Heart left ventricle (tissue), 16 donors: ENCODE measurements at regions of chr11 and their contacts with region 1.

Region 1: DNA sequence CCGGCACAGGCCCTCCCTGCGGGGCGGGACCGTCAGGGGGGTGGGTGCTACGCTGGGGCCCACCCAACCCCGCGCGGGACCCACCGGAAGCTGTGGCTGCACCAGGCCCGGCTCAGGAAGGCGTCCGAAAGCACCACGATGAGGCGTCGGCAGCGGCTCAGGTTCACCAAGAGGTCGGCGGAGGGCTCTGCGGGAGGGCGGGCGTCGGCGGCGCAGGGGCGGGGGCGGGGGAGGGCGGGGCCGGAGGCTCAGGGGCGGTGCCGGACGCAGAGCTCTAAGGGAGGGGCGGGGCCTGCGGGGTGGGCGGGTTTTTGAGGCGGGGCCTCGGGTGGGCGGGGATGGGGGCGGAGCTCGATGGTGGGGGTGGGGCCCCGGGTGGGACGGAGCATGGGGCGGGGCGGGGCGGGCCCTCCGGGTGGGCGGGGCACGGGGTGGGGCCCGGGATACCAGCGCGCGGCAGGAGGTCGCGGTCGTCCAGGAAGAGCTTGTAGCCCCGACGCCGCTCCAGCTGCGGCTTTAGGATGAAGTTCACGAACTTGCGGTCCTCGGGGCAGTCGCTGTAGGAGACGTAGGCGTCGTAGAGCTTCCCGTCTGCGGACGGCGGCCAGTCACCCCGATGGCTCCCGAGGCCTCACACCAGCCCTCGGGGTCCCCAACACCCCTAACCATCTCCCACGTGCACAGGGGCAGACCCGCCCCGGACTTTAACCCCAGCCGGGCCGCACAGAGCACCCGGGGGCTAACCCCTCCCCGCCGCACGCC is 7.6 kb downstream of the SIGIRR start:
- DNase-seq: peak; percentile 85 to 93 (median 88)
- ATAC-seq: peak; percentile 44 to 81 (median 78)
- H3K4me3 ChIP-seq: peak overlapping the region; percentile 49 to 76 (median 67)
- H3K27ac ChIP-seq: peak overlapping the region; percentile 28 to 82 (median 75)
- H3K4me1 ChIP-seq: peaks cover 0 to 24% (median 15%) of the 10 kb centered on the region in 12 donors
- H3K27me3 ChIP-seq: peaks cover 0 to 8% (median 0%) of the 10 kb centered on the region in 9 donors
- CTCF ChIP-seq: no peak
- POLR2A ChIP-seq: no peak

Region 2: DNA sequence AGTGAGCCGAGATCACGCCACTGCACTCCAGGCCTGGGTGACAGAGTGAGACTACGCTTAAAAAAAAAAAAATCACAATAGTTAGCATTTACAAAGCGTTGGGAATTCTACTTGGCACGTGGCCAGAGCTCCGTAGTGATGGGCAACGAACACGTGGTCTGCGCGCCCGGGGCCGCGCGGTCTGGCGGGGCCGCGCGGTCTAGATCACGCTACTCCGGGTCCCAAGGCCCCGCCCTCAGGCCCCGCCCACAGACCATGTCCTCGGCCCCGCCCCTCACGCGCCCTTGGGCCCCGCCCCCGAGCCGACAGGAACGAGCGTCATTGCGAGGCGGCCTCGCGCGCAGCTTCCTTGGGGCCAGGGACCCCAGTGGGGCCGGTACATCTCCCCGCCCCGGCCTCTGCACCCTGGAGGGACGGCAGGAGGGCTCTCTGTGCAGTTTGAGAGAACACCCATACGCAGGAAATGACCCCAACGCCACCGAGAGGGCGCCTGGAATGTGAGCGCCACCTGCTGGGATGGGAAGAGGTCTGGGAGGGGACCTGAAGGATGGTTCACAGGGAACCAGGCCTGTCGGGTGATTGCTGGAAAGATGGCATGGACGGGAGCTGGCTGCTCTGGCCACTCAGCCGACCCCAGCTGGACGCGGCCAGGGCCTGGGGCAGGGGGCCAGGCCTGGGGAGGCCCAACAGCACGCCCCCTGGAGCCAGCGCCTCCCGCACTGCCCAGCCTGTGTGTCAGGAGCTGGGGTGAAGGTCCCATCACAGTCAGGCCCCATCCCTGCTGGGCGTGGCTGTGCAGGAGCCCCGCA is 41.0 kb after region 1 on chr11:
- intact Hi-C with region 1: loop called in 8 of 10 experiments (anchors 2 to 5 kb)
- DNase-seq: peak; percentile 95 to 98 (median 95)
- ATAC-seq: peak; percentile 85 to 90 (median 86)
- H3K4me3 ChIP-seq: peak overlapping the region; percentile 26 to 92 (median 64)
- H3K27ac ChIP-seq: peak overlapping the region; percentile 77 to 97 (median 93)
- H3K4me1 ChIP-seq: peaks cover 0 to 45% (median 28%) of the 10 kb centered on the region in 12 donors
- H3K27me3 ChIP-seq: peaks cover 0 to 3% (median 0%) of the 10 kb centered on the region in 9 donors
- CTCF ChIP-seq: peak; percentile 64 to 98 (median 84)
- POLR2A ChIP-seq: peak in 1 of 2 donors; percentile 82

Region 3: DNA sequence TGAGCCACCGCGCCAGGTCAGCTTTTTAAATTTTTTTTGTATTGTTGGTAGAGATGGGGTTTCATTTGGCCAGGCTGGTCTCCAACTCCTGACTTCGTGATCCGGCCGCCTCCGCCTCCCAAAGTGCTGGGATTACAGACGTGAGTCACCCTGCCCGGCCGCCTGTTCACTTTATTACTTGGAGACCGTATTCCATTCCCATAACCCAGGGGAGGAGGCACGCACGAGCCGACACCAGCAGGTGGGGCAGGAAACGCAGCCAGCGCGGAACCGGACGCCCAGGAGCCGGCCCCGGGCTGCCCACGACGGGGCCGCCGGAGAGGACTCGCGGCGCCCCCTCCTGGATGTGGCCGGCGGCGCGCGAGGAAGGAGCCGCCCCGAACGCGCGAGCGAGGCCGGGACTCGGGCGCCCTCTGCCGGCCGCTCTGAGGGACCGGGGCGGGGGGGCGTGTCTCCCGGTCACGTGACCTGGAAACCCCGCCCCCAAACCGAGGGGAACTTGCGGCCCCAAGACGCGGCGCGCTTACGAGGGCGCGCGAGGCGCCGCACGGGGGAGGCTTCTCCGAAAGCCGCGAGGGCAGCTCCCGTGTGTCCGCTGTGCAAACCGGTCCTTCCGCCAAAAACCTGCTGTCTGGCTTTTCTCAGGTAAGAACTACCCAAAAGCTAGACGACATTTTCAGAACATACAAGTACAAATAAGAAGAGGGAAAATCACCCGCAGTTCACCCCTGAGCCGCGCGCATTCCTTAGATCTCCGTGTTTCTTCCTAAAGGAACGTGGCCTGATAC is 111.5 kb after region 1 on chr11:
- intact Hi-C with region 1: loop called in 3 of 10 experiments (anchors 1 to 10 kb)
- DNase-seq: peak; percentile 86 to 95 (median 92)
- ATAC-seq: peak; percentile 85 to 98 (median 98)
- H3K4me3 ChIP-seq: peak overlapping the region in 10 of 12 donors; percentile 2 to 49 (median 32)
- H3K27ac ChIP-seq: peak overlapping the region in 11 of 12 donors; percentile 34 to 83 (median 73)
- H3K4me1 ChIP-seq: peaks cover 0 to 10% (median 4%) of the 10 kb centered on the region in 12 donors
- H3K27me3 ChIP-seq: no peaks in the 10 kb centered on the region
- CTCF ChIP-seq: peak in 11 of 12 donors; percentile 96 to 100 (median 100)
- POLR2A ChIP-seq: peak in 1 of 2 donors; percentile 61

Region 4: DNA sequence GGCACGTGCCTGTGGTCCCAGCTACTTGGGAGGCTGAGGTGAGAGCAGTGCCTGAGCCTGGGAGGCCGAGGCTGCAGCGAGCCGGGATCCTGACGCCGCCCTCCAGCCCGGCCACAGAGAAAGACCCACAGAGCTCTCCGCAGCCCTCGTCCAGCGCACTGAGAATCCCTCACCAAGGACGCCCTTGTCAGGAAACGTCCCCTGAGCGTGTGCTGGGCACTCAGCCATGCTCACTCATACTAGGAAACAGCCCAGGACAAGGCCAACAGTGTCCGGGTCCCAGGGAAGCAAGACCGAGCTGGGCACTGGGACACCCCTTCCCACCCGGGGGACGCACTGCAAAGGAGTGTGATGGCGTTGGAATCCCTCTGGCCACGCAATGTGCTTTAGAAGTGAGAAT is 273.3 kb after region 1 on chr11:
- intact Hi-C with region 1: no loop called
- DNase-seq: peak in 3 of 5 donors; percentile 39 to 77 (median 69)
- ATAC-seq: peak; percentile 76 to 95 (median 86)
- H3K4me3 ChIP-seq: no peak overlapping the region
- H3K27ac ChIP-seq: peak overlapping the region in 8 of 12 donors; percentile 13 to 60 (median 46)
- H3K4me1 ChIP-seq: peaks cover 0 to 8% (median 0%) of the 10 kb centered on the region in 12 donors
- H3K27me3 ChIP-seq: no peaks in the 10 kb centered on the region
- CTCF ChIP-seq: no peak
- POLR2A ChIP-seq: no peak